ENCODE measurements at regions of chr1 and their contacts with region 1.

Region 1: GRCh38 chr1:26541816-26542711 is 12.5 kb downstream of the RPS6KA1 start:
- DNase-seq: peak; percentile 99 to 100 (median 99)
- H3K4me3 ChIP-seq: peak overlapping the region; percentile 38 to 89 (median 49)
- H3K4me3 Mint-ChIP-seq: peak overlapping the region; percentile 87 to 93
- H3K27ac ChIP-seq: peak overlapping the region; percentile 97 to 99
- H3K27ac Mint-ChIP-seq: peak overlapping the region; percentile 99 to 100 (median 100)
- H3K4me1 ChIP-seq: peaks cover 90 to 95% of the 10 kb centered on the region in 2 donors
- H3K4me1 Mint-ChIP-seq: peaks cover 88% of the 10 kb centered on the region
- H3K27me3 ChIP-seq: no peaks in the 10 kb centered on the region
- H3K27me3 Mint-ChIP-seq: no peaks in the 10 kb centered on the region
- CTCF ChIP-seq: peak; percentile 88

Region 2: DNA sequence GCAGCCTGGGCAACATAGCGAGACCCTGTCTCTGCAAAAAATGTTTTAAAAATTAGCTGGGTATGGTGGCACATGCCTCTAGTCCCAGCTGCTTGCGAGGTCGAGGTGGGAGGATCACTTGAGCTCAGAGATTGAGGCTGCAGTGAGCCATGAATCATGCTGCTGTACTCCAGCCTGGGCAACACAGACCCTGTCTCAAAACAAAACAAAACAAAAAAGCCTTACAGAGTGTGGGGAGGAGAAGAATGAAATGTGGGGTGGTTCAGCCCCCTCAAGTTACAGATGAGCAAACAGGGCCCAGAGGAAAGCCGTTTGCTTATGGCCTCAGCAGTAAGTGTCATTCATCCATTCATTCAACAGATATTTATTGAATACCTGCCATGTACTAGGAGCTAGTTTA is 28.2 kb after region 1 on chr1:
- intact Hi-C with region 1: no loop called
- DNase-seq: no peak
- H3K4me3 ChIP-seq: no peak overlapping the region
- H3K4me3 Mint-ChIP-seq: no peak overlapping the region
- H3K27ac ChIP-seq: peak overlapping the region in 1 of 2 donors; percentile 36
- H3K27ac Mint-ChIP-seq: peak overlapping the region in 2 of 7 donors; percentile 26 to 80
- H3K4me1 ChIP-seq: peaks cover 14 to 18% of the 10 kb centered on the region in 2 donors
- H3K4me1 Mint-ChIP-seq: peaks cover 17% of the 10 kb centered on the region
- H3K27me3 ChIP-seq: no peaks in the 10 kb centered on the region
- H3K27me3 Mint-ChIP-seq: peaks cover 0 to 2% (median 0%) of the 10 kb centered on the region in 3 donors
- CTCF ChIP-seq: no peak

Region 3: DNA sequence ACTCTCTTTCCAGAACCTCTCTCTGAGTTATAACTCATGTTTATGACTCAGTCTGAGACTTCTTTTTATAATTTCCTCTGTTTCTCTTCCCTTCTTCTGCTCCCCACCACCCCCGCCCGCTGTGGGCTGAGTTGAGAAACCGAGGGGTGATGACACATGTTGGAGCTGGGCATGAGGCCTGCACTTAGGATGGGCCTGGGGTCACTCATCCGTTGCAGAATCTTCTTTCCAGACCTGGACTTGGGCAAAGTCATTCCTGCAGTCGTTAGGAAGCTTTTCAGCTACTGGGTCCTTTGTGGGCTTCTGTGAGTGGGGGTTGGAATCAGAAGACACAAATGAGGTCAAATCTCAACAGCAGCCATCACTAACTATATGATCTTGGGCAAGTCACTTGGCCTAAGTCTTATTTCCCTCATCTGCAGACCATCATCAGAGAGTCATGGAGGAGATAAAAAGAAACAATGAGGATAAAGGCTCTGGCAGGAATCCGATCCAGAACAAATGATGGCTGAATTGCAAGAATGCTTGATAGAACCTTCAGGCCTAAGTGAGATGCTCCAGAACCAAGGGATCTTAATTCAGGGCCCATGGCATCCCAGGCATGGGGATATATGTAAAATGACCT is 40.9 kb after region 1 on chr1:
- intact Hi-C with region 1: loop called (anchors 1 to 5 kb)
- DNase-seq: peak; percentile 87 to 95 (median 88)
- H3K4me3 ChIP-seq: no peak overlapping the region
- H3K4me3 Mint-ChIP-seq: peak overlapping the region; percentile 49 to 59
- H3K27ac ChIP-seq: peak overlapping the region; percentile 75 to 82
- H3K27ac Mint-ChIP-seq: peak overlapping the region; percentile 68 to 95 (median 89)
- H3K4me1 ChIP-seq: peaks cover 41% of the 10 kb centered on the region in 2 donors
- H3K4me1 Mint-ChIP-seq: peaks cover 43% of the 10 kb centered on the region
- H3K27me3 ChIP-seq: no peaks in the 10 kb centered on the region
- H3K27me3 Mint-ChIP-seq: peaks cover 0 to 2% (median 1%) of the 10 kb centered on the region in 3 donors
- CTCF ChIP-seq: no peak

Measured in CD14-positive monocyte (primary cell).